AG04449 (cell line): ENCODE measurements at regions of chr16 and their contacts with region 1.

Region 1: GRCh38 chr16:10737068-10737625 is 6.5 kb upstream of the NUBP1 start:
- DNase-seq: no peak
- H3K4me3 ChIP-seq: no peak overlapping the region
- CTCF ChIP-seq: peak; percentile 75

Region 2: GRCh38 chr16:10256784-10257641 is 480.1 kb before region 1 on chr16:
- CTCF ChIA-PET with region 1: interaction called, 17 read pairs
- POLR2A ChIA-PET with region 1: no interaction called
- DNase-seq: no peak
- H3K4me3 ChIP-seq: no peak overlapping the region
- CTCF ChIP-seq: peak; percentile 91

Region 3: DNA sequence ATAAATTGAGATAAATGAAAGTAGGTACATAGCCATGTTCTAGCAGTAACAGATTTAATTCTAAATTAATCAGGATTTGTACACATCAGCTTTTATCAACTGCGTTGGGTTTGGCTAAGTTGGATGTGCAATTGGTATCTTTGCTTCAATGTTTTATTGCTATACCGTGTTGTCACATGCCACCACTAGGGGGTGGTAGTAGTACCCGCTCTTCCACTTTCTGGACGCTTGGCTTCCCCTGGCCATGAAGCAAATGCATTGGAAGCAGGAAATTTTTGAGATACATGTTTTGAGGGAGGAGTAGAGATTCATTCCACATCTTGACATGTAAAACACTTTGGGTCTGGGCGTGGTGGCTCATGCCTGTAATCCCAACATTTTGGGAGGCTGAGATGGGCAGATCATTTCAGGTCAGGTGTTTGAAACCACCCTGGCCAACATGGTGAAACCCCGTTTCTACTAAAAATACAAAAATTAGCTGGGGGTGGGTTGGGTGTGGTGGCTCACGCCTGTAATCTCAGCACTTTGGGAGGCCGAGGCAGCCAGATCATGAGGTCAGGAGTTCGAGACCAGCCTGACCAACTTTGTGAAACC is 215.4 kb before region 1 on chr16:
- CTCF ChIA-PET with region 1: interaction called, 242 read pairs
- POLR2A ChIA-PET with region 1: no interaction called
- DNase-seq: no peak
- H3K4me3 ChIP-seq: no peak overlapping the region
- CTCF ChIP-seq: peak; percentile 61